Activated T-helper 2 cell treated with anti-CD3 and anti-CD28 coated beads, Interferon-gamma antibody, Interleukin-2, Interleukin-4, amounts not matched to agents 10 μg/mL and 5 μg/mL and 100 μg/mL, durations not matched to agents 14 hours and 24 hours and 36 hours (primary cell): ENCODE measurements at regions of chr2 and their contacts with region 1.

Region 1: GRCh38 chr2:98012561-98012991 is 16.8 kb upstream of the TMEM131 start:
- DNase-seq: no peak
- H3K4me3 Mint-ChIP-seq: no peak overlapping the region
- H3K27ac Mint-ChIP-seq: peak overlapping the region; percentile 71
- H3K4me1 Mint-ChIP-seq: peaks cover 30% of the 10 kb centered on the region
- H3K27me3 Mint-ChIP-seq: no peaks in the 10 kb centered on the region

Region 2: DNA sequence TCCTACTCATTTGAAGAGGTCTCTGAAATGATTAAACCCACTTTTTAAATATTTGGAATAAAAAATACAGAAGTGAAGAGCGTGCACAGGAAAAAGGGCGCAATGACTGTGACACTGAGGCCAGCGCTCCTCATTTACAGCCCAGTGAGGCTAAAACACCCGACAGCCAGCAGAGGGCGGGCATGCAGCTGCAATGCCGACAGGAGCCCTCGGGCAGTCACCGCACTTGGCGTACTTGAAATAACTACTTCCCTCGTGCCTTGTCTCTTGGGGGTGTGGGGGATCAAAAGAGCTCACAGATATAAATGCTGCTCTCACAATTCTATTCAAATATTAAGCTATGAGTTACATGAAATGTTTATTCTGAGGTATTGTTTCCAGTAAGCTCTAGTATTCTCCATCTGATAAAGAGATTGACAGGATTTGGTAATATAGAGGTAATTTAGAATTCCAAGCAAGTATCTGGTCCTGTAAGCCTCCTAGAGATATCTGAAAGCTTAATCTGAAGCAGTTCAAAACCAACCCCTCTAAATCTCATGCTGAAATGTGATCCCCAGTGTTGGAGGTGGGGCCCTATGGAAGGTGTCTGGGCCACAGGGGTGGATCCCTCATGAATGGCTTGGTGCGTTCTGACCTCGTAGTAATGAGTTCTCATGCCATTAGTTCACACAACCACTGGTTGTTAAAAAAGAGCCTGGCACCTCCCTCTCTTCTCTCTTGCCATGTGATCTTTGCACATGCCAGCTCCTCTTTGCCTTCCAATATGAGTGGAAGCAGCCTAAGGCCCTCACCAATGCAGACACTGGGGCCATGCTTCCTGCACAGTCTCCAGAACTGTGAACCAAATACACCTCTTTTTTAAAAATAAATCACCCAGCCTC is 205.6 kb before region 1 on chr2:
- intact Hi-C with region 1: loop called (anchors 5 kb)
- DNase-seq: peak; percentile 61
- H3K4me3 Mint-ChIP-seq: no peak overlapping the region
- H3K27ac Mint-ChIP-seq: no peak overlapping the region
- H3K4me1 Mint-ChIP-seq: peaks cover 6% of the 10 kb centered on the region
- H3K27me3 Mint-ChIP-seq: no peaks in the 10 kb centered on the region

Region 3: GRCh38 chr2:97870396-97870843 is 142.2 kb before region 1 on chr2:
- intact Hi-C with region 1: loop called (anchors 1 kb)
- DNase-seq: peak; percentile 68
- H3K4me3 Mint-ChIP-seq: peak overlapping the region; percentile 48
- H3K27ac Mint-ChIP-seq: peak overlapping the region; percentile 37
- H3K4me1 Mint-ChIP-seq: peaks cover 30% of the 10 kb centered on the region
- H3K27me3 Mint-ChIP-seq: no peaks in the 10 kb centered on the region

Region 4: GRCh38 chr2:97935719-97936161 is 76.8 kb before region 1 on chr2:
- intact Hi-C with region 1: no loop called
- DNase-seq: no peak
- H3K4me3 Mint-ChIP-seq: no peak overlapping the region
- H3K27ac Mint-ChIP-seq: no peak overlapping the region
- H3K4me1 Mint-ChIP-seq: peaks cover 45% of the 10 kb centered on the region
- H3K27me3 Mint-ChIP-seq: no peaks in the 10 kb centered on the region

Region 5: DNA sequence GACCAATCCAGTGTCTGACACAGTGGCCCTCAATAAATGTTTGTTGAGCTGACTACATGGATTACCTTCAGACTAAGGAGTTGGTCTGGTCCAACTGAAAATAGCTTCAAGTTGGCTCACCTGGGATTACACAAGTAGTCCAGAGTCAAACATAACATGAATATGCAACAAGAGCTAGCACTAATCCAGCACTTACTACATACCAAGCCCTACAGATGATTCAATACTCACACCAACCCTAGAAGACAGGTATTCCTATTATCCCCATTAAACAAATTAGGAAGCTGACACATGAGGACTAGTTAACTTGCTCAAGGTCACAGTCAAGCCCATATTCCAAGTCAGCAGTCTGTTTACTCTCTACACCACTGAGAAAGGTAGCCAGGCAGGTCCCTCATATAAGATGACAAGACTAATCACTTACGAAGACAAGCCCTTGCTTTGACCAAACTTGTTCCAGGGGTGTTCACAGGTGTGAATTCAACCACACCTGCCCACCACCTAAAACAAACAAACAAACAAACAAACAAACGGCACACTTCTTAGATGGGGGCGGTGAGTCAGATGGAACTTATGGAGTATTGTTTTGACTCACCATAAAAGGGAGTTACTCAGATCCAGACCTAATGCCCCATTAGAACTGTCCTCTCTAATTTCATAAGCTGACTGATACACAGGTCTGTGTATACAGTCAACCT is 45.9 kb before region 1 on chr2:
- intact Hi-C with region 1: loop called (anchors 1 kb)
- DNase-seq: no peak
- H3K4me3 Mint-ChIP-seq: no peak overlapping the region
- H3K27ac Mint-ChIP-seq: no peak overlapping the region
- H3K4me1 Mint-ChIP-seq: peaks cover 56% of the 10 kb centered on the region
- H3K27me3 Mint-ChIP-seq: no peaks in the 10 kb centered on the region

Region 6: DNA sequence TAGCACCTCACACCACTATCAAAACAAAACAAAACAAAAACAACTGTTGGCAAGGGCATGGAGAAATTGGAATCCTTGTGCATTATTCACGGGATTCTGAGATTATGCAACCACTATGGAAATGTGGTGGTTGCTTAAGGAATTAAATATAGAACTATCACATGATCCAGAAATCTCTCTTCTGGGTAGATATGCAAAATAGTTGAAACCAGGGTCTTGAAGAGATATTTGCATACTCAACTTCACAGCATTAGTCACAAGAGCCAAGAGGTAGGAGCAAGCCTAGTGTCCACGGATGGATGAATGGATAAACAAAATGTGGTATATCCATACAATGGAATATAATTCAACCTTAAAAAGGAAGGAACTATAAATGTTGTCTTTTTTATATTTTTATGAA is 23.9 kb before region 1 on chr2:
- intact Hi-C with region 1: no loop called
- DNase-seq: no peak
- H3K4me3 Mint-ChIP-seq: no peak overlapping the region
- H3K27ac Mint-ChIP-seq: no peak overlapping the region
- H3K4me1 Mint-ChIP-seq: peaks cover 23% of the 10 kb centered on the region
- H3K27me3 Mint-ChIP-seq: no peaks in the 10 kb centered on the region

Region 7: DNA sequence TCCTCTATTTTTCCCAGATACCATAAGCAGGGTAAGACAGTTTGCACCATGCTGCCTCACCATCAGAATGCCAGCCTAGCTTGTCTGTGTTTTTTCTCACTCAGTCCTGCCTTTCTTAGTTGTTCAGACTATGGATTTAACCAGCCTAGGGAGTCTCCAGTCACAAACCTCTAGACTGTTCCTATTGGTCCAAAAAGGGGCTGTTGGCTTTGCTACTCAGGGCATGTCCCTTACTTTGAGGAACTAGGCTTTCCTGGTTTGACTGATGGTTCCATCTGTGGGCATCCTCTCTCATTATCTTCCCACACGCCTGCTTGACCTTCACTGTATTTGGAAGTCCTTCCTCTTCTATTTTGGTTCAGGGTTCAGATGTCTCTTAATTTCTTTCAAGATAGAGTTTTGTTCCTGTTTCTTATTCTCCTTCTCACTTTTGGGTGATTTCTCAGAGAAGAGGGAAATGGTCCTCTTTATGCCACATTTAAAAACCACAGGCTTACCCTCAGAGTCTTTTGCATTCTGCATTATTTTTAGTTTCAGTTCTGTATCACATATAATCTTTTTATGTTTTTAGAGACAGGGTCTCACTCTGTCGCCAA is 14.4 kb after region 1 on chr2:
- intact Hi-C with region 1: loop called (anchors 1 kb)
- DNase-seq: no peak
- H3K4me3 Mint-ChIP-seq: no peak overlapping the region
- H3K27ac Mint-ChIP-seq: peak overlapping the region; percentile 61
- H3K4me1 Mint-ChIP-seq: peaks cover 24% of the 10 kb centered on the region
- H3K27me3 Mint-ChIP-seq: peaks cover 16% of the 10 kb centered on the region

Region 8: DNA sequence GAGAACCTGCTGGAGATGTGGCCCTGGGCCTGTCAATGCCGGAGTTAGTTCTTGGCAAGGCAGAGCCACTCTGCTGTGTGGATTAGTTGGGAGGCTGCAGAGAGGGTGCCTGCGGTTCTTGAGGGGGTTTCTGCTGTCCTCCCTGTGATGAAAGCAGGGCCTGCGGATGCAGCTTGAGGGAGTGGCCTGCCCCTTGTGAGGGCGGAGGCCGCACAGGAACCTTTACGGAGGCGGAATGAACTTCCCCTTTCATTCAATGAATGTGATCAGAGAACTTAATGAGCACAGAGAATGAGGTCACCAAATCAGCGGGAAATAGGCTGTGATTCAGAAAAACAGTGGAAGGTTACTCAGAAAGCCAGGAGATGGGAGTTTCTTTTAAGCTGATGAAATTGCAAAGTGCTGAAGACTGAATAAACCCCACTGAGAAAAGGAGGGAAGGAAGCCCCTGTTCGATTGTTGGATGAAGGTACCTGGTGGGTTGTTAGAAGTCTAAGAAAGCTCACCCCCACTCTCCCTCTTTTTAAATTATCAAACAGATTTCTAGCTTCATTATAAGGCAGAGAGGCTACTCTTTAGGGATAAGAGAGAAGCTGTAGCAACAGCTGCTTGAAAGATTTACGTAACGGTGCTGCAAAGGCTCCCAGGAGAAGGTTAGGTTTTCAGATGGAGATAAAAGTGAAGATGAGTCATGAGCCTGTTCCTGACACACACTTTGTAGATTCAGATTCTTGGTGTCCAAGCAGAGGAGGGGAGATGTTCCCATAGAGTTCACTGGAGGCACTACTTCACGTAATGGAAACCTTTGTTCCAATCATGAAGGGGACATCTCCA is 121.8 kb after region 1 on chr2:
- intact Hi-C with region 1: loop called (anchors 2 kb)
- DNase-seq: peak; percentile 13
- H3K4me3 Mint-ChIP-seq: no peak overlapping the region
- H3K27ac Mint-ChIP-seq: peak overlapping the region; percentile 52
- H3K4me1 Mint-ChIP-seq: peaks cover 20% of the 10 kb centered on the region
- H3K27me3 Mint-ChIP-seq: no peaks in the 10 kb centered on the region